Naive thymus-derived CD4-positive, alpha-beta T cell (primary cell): ENCODE measurements at regions of chr11 and their contacts with region 1.

Region 1: DNA sequence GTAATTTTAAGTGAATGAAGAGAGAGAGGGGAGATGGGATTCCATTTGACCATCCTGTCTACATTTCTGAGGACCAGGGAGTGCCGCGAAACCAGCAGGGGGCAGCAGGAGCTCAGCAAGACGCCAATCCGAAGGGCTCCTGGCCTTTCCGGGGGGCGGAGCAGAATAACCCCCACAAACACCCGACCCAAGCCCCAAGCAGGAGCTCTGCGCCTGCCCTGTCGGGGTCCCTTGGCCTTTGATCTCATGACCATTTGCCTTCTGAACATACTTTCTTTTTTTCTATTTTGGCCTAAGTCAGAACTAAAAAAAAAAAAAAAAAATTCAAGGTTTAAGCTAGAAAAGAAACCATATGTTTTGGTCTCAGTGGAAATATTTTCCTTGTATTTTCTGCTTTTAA is 21.9 kb upstream of the SCN2B start:
- DNase-seq: peak; percentile 66 to 82 (median 75)
- ATAC-seq: peak; percentile 80
- H3K4me3 ChIP-seq: no peak overlapping the region
- H3K4me3 Mint-ChIP-seq: peak overlapping the region in 7 of 10 donors; percentile 12 to 53 (median 38)
- H3K27ac ChIP-seq: peak overlapping the region; percentile 10
- H3K27ac Mint-ChIP-seq: peak overlapping the region; percentile 16 to 84 (median 76)
- H3K4me1 ChIP-seq: peaks cover 28 to 47% of the 10 kb centered on the region in 2 donors
- H3K4me1 Mint-ChIP-seq: peaks cover 5 to 14% (median 11%) of the 10 kb centered on the region in 7 donors
- H3K27me3 ChIP-seq: no peaks in the 10 kb centered on the region
- H3K27me3 Mint-ChIP-seq: no peaks in the 10 kb centered on the region

Region 2: DNA sequence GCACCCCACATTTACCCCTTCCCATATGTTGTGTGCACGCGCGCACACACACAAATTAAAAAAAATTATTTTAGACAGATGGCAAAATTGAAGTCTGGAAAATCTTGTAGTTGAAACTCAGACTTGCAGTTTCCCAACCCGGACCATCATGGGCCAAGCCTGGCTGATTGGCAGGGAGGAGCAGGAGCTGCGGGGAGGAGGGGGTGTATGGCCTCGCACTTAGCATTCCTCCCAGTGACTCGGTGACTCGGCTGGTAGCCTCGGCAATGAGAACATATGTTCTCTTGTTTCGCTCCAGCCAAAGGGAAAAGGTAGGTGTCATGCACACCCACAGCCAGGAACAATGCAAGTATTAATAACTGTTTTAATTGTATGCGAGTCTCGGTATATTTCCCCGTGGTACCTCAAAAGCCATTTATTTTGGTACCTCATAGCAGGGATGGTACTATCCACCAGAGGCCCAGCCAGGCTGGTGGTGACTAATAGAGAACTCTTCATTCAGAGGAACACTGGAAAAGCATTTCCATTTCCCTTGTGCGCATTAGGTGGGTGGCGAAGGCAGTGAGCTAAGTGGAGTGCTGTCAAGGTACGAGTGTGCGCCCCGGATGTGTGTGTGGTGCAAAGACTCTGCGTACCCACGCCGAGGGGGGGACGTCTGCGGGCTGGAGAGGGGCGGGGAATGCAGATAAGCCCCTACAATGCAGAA is 493.8 kb before region 1 on chr11:
- CTCF ChIA-PET with region 1: no interaction called
- POLR2A ChIA-PET with region 1: no interaction called
- intact Hi-C with region 1: no loop called
- DNase-seq: no peak
- ATAC-seq: no peak
- H3K4me3 ChIP-seq: no peak overlapping the region
- H3K4me3 Mint-ChIP-seq: no peak overlapping the region
- H3K27ac ChIP-seq: no peak overlapping the region
- H3K27ac Mint-ChIP-seq: no peak overlapping the region
- H3K4me1 ChIP-seq: no peaks in the 10 kb centered on the region
- H3K4me1 Mint-ChIP-seq: peaks cover 0 to 9% (median 5%) of the 10 kb centered on the region in 7 donors
- H3K27me3 ChIP-seq: peaks cover 0 to 3% of the 10 kb centered on the region in 2 donors
- H3K27me3 Mint-ChIP-seq: peaks cover 18 to 27% (median 18%) of the 10 kb centered on the region in 5 donors

Region 3: GRCh38 chr11:118227865-118228785 is 29.8 kb after region 1 on chr11:
- CTCF ChIA-PET with region 1: interaction called, 17 read pairs
- POLR2A ChIA-PET with region 1: interaction called, 21 read pairs
- intact Hi-C with region 1: loop called (anchors 1 kb)
- DNase-seq: peak in 4 of 9 donors; percentile 23 to 49 (median 41)
- ATAC-seq: peak; percentile 34
- H3K4me3 ChIP-seq: peak overlapping the region; percentile 4
- H3K4me3 Mint-ChIP-seq: peak overlapping the region in 9 of 10 donors; percentile 3 to 77 (median 66)
- H3K27ac ChIP-seq: peak overlapping the region; percentile 61
- H3K27ac Mint-ChIP-seq: peak overlapping the region in 1 of 9 donors; percentile 91
- H3K4me1 ChIP-seq: peaks cover 59 to 70% of the 10 kb centered on the region in 2 donors
- H3K4me1 Mint-ChIP-seq: peaks cover 10 to 55% (median 46%) of the 10 kb centered on the region in 7 donors
- H3K27me3 ChIP-seq: no peaks in the 10 kb centered on the region
- H3K27me3 Mint-ChIP-seq: no peaks in the 10 kb centered on the region

Region 4: DNA sequence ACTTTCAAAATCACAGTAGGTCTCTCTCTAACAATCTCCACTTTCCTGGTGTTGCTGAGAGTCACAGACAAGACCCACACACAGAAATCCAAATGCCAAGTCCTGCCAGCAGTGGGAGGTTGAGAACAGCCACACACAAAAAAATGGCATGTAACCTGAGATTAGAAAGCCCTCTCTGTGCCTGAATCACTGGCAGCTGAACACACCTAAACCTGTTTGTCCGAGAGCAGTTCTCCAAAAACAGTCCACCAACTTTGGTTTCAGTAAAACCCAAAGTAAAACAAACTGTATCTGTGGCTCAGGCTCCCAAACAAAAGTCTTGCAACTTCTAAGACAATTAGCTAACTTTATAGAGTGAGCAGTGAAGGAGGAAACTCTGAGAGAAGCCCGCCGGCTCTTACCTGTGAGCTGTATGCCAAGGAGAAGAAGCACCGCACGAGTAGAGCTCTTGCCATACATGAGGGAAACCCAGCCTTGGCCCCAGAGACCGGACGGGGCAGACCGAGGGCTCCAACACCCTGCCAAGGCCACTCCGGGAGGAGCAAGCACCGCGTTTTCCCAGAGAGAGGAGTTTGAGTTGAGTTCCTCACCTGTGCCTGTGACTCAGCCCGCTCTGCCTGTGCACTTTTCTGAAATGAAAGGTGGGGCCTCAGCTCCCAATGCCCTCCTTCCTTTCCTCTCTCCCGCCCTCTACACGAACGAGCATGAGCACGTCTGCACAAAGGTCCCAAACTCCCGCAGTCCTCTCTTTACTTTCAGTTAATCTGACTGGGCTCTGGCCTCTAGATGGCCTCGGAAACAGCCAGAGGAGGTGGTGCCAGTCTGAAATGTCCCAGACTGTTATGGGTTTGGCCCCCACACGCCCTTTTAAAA is 65.6 kb after region 1 on chr11 and contains the start of gene MPZL2:
- CTCF ChIA-PET with region 1: interaction called, 11 read pairs
- POLR2A ChIA-PET with region 1: interaction called, 7 read pairs
- intact Hi-C with region 1: no loop called
- DNase-seq: peak in 8 of 9 donors; percentile 11 to 47 (median 28)
- ATAC-seq: peak; percentile 72
- H3K4me3 ChIP-seq: peak within 1 kb of the TSS; percentile 29
- H3K4me3 Mint-ChIP-seq: peak within 1 kb of the TSS; percentile 78 to 91 (median 88)
- H3K27ac ChIP-seq: peak within 1 kb of the TSS; percentile 55
- H3K27ac Mint-ChIP-seq: peak within 1 kb of the TSS; percentile 30 to 94 (median 75)
- H3K4me1 ChIP-seq: peaks cover 0 to 14% of the 10 kb centered on the region in 2 donors
- H3K4me1 Mint-ChIP-seq: peaks cover 19 to 44% (median 37%) of the 10 kb centered on the region in 7 donors
- H3K27me3 ChIP-seq: no peaks in the 10 kb centered on the region
- H3K27me3 Mint-ChIP-seq: peaks cover 0 to 19% (median 0%) of the 10 kb centered on the region in 5 donors
- total RNA-seq, gene MPZL2: 0.69 to 5.9 (median 1.6) TPM

Region 5: DNA sequence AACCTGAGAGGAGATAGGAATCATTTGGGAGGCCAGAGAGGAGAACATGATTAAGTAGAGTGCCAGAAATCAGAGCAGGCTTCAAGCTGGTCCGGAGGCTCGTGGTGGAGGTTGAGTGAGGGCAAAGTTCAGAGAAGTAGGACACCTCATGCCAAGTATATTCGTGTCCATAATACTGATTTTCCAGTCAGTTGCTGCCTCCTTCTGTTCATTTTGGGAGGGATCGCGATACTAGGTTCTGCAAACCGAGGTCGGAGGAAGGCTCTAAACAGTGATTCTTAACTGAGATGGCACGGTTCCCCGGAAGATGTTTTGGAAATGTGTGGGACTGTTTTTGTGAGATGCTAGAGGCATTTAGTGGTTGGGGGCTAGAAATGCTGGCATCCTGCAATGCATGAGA is 92.6 kb after region 1 on chr11:
- CTCF ChIA-PET with region 1: interaction called, 56 read pairs
- POLR2A ChIA-PET with region 1: interaction called, 8 read pairs
- intact Hi-C with region 1: loop called (anchors 1 kb)
- DNase-seq: peak in 8 of 9 donors; percentile 22 to 63 (median 46)
- ATAC-seq: peak; percentile 81
- H3K4me3 ChIP-seq: no peak overlapping the region
- H3K4me3 Mint-ChIP-seq: peak overlapping the region in 2 of 10 donors; percentile 30 to 33
- H3K27ac ChIP-seq: no peak overlapping the region
- H3K27ac Mint-ChIP-seq: peak overlapping the region in 1 of 9 donors; percentile 68
- H3K4me1 ChIP-seq: peaks cover 0 to 11% of the 10 kb centered on the region in 2 donors
- H3K4me1 Mint-ChIP-seq: peaks cover 13 to 19% (median 15%) of the 10 kb centered on the region in 7 donors
- H3K27me3 ChIP-seq: no peaks in the 10 kb centered on the region
- H3K27me3 Mint-ChIP-seq: no peaks in the 10 kb centered on the region

Region 6: GRCh38 chr11:118353084-118353710 is 154.8 kb after region 1 on chr11:
- CTCF ChIA-PET with region 1: interaction called, 8 read pairs
- POLR2A ChIA-PET with region 1: interaction called, 8 read pairs
- intact Hi-C with region 1: loop called (anchors 1 to 2 kb)
- DNase-seq: peak in 7 of 9 donors; percentile 21 to 70 (median 61)
- ATAC-seq: peak; percentile 51
- H3K4me3 ChIP-seq: no peak overlapping the region
- H3K4me3 Mint-ChIP-seq: no peak overlapping the region
- H3K27ac ChIP-seq: peak overlapping the region; percentile 62
- H3K27ac Mint-ChIP-seq: peak overlapping the region; percentile 38 to 96 (median 91)
- H3K4me1 ChIP-seq: peaks cover 13 to 15% of the 10 kb centered on the region in 2 donors
- H3K4me1 Mint-ChIP-seq: peaks cover 5 to 53% (median 35%) of the 10 kb centered on the region in 7 donors
- H3K27me3 ChIP-seq: no peaks in the 10 kb centered on the region
- H3K27me3 Mint-ChIP-seq: no peaks in the 10 kb centered on the region

Region 7: DNA sequence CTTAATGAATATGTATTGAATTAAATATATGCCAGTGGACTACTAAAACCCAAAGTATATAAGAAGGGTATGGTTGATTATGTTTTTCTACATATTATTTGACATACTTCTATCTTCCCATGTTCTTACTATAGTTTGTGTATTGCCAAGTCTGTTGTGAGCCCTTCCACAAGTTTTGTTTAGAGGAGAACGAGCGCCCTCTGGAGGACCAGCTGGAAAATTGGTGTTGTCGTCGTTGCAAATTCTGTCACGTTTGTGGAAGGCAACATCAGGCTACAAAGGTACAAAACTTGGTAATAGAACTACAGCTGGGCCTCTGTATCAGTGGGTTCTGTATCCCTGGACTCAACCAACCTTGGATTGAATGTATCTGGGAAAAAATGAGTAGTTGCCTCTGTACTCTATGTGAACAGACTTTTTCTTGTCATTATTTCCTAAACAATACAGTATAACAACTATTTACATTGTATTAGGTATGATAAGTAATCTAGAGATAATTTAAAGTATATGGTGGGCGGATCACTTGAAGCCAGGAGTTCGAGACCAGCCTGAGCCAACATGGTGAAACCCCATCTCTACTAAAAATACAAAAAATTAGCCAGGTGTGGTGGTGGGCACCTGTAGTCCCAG is 290.2 kb after region 1 on chr11:
- CTCF ChIA-PET with region 1: interaction called, 3 read pairs
- POLR2A ChIA-PET with region 1: no interaction called
- intact Hi-C with region 1: loop called (anchors 1 to 2 kb)
- DNase-seq: peak; percentile 66 to 86 (median 80)
- ATAC-seq: peak; percentile 89
- H3K4me3 ChIP-seq: no peak overlapping the region
- H3K4me3 Mint-ChIP-seq: no peak overlapping the region
- H3K27ac ChIP-seq: peak overlapping the region; percentile 53
- H3K27ac Mint-ChIP-seq: peak overlapping the region in 7 of 9 donors; percentile 10 to 89 (median 57)
- H3K4me1 ChIP-seq: no peaks in the 10 kb centered on the region
- H3K4me1 Mint-ChIP-seq: peaks cover 0 to 12% (median 5%) of the 10 kb centered on the region in 7 donors
- H3K27me3 ChIP-seq: no peaks in the 10 kb centered on the region
- H3K27me3 Mint-ChIP-seq: no peaks in the 10 kb centered on the region